Endothelial cell of umbilical vein (primary cell): ENCODE measurements at regions of chrX and their contacts with region 1.

Region 1: GRCh38 chrX:120672390-120672789 is 42.5 kb upstream of the C1GALT1C1 start:
- DNase-seq: peak; percentile 85
- H3K4me3 ChIP-seq: no peak overlapping the region
- H3K27ac ChIP-seq: peak overlapping the region; percentile 94
- H3K4me1 ChIP-seq: peaks cover 31% of the 10 kb centered on the region
- H3K27me3 ChIP-seq: no peaks in the 10 kb centered on the region
- CTCF ChIP-seq: no peak
- POLR2A ChIP-seq: peak; percentile 21

Region 2: GRCh38 chrX:120603707-120604360 is 68.6 kb before region 1 on chrX and contains the start of gene MCTS1:
- CTCF ChIA-PET with region 1: no interaction called
- POLR2A ChIA-PET with region 1: interaction called, 4 read pairs
- dilution Hi-C with region 1: no loop called
- intact Hi-C with region 1: loop called (anchors 5 kb)
- DNase-seq: peak; percentile 94
- H3K4me3 ChIP-seq: peak within 1 kb of the TSS; percentile 76 to 83 (median 79)
- H3K27ac ChIP-seq: peak within 1 kb of the TSS; percentile 72
- H3K4me1 ChIP-seq: peaks cover 10% of the 10 kb centered on the region
- H3K27me3 ChIP-seq: no peaks in the 10 kb centered on the region
- CTCF ChIP-seq: no peak
- POLR2A ChIP-seq: no peak
- total RNA-seq, gene MCTS1: 63.2 and 70.0 TPM in 2 replicates

Region 3: GRCh38 chrX:120629667-120630537 is 42.5 kb before region 1 on chrX and contains the start of gene C1GALT1C1:
- CTCF ChIA-PET with region 1: no interaction called
- POLR2A ChIA-PET with region 1: no interaction called
- dilution Hi-C with region 1: no loop called
- intact Hi-C with region 1: loop called (anchors 1 kb)
- DNase-seq: peak; percentile 93
- H3K4me3 ChIP-seq: peak within 1 kb of the TSS; percentile 62 to 89 (median 85)
- H3K27ac ChIP-seq: peak within 1 kb of the TSS; percentile 68
- H3K4me1 ChIP-seq: peaks cover 3% of the 10 kb centered on the region
- H3K27me3 ChIP-seq: no peaks in the 10 kb centered on the region
- CTCF ChIP-seq: no peak
- POLR2A ChIP-seq: peak; percentile 82
- total RNA-seq, gene C1GALT1C1: 32.9 and 34.6 TPM in 2 replicates

Region 4: GRCh38 chrX:120726294-120726693 is 53.9 kb after region 1 on chrX:
- CTCF ChIA-PET with region 1: no interaction called
- POLR2A ChIA-PET with region 1: no interaction called
- dilution Hi-C with region 1: no loop called
- intact Hi-C with region 1: no loop called
- DNase-seq: no peak
- H3K4me3 ChIP-seq: no peak overlapping the region
- H3K27ac ChIP-seq: no peak overlapping the region
- H3K4me1 ChIP-seq: no peaks in the 10 kb centered on the region
- H3K27me3 ChIP-seq: no peaks in the 10 kb centered on the region
- CTCF ChIP-seq: no peak
- POLR2A ChIP-seq: no peak

Region 5: DNA sequence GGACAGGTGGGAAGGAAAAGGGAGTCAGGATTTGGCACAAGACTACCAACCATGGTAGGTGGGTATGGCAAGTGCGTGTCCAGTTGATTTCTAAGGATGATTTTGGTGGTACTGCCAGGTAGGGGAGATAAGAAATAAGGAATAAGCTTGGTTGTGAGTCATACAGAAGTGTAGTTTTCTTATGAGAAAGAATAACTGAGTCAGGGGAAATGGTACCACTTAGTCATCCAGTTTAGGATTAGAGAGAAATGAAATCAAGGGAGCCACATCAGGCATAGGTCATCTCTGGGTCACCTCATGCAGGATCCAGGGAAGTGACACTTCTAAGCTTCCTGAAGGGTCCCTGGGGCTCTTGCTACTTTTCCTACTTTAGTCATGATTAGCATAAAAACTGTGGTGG is 64.6 kb after region 1 on chrX:
- CTCF ChIA-PET with region 1: no interaction called
- POLR2A ChIA-PET with region 1: no interaction called
- dilution Hi-C with region 1: no loop called
- intact Hi-C with region 1: loop called (anchors 1 kb)
- DNase-seq: peak; percentile 80
- H3K4me3 ChIP-seq: no peak overlapping the region
- H3K27ac ChIP-seq: peak overlapping the region; percentile 49
- H3K4me1 ChIP-seq: peaks cover 28% of the 10 kb centered on the region
- H3K27me3 ChIP-seq: no peaks in the 10 kb centered on the region
- CTCF ChIP-seq: no peak
- POLR2A ChIP-seq: peak; percentile 26